GM10248 (cell line): ENCODE measurements at regions of chr10 and their contacts with region 1.

Region 1: GRCh38 chr10:71569775-71570588 is 149.6 kb downstream of the C10orf105 start:
- DNase-seq: peak; percentile 84
- CTCF ChIP-seq: peak; percentile 85

Region 2: DNA sequence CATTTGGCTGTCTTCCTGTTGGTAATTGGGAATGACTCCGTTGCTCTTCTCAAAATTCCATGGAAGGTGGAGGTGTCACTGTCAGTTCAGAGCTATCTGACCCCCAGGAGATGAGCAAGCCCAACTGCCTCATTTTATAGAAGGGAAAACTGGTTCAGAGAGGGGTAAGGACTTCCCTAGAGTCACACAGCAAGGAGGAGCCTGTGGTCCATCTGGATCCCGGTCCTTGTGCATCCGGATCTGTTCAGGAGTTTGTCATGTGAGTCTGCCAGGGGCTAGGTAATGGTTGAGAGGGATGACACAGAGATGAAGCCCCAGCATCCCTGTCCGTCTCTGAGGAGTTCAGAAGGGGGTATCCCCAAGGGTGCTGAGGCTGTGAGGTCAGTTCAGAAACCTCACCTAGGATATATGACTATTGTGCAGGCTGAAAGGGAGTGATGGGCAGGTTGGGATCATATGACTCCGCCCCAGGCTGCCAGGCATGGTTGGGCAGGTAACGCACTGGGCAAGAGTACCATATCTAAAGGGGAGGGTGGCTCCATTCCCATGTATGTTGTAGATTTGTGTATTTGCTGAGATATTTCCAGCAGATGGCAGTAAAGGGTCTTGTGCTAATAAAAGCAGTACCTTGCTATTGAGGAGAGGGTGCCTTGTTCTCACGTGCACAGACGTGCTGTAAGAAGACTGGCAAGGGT is 267.0 kb before region 1 on chr10:
- CTCF ChIA-PET with region 1: interaction called, 20 read pairs
- POLR2A ChIA-PET with region 1: no interaction called
- DNase-seq: peak; percentile 66
- CTCF ChIP-seq: peak; percentile 39

Region 3: GRCh38 chr10:71378336-71379117 is 191.5 kb before region 1 on chr10:
- CTCF ChIA-PET with region 1: interaction called, 61 read pairs
- POLR2A ChIA-PET with region 1: no interaction called
- DNase-seq: no peak
- CTCF ChIP-seq: no peak

Region 4: GRCh38 chr10:71396084-71396720 is 173.8 kb before region 1 on chr10:
- CTCF ChIA-PET with region 1: interaction called, 13 read pairs
- POLR2A ChIA-PET with region 1: no interaction called
- DNase-seq: peak; percentile 56
- CTCF ChIP-seq: peak; percentile 33

Region 5: DNA sequence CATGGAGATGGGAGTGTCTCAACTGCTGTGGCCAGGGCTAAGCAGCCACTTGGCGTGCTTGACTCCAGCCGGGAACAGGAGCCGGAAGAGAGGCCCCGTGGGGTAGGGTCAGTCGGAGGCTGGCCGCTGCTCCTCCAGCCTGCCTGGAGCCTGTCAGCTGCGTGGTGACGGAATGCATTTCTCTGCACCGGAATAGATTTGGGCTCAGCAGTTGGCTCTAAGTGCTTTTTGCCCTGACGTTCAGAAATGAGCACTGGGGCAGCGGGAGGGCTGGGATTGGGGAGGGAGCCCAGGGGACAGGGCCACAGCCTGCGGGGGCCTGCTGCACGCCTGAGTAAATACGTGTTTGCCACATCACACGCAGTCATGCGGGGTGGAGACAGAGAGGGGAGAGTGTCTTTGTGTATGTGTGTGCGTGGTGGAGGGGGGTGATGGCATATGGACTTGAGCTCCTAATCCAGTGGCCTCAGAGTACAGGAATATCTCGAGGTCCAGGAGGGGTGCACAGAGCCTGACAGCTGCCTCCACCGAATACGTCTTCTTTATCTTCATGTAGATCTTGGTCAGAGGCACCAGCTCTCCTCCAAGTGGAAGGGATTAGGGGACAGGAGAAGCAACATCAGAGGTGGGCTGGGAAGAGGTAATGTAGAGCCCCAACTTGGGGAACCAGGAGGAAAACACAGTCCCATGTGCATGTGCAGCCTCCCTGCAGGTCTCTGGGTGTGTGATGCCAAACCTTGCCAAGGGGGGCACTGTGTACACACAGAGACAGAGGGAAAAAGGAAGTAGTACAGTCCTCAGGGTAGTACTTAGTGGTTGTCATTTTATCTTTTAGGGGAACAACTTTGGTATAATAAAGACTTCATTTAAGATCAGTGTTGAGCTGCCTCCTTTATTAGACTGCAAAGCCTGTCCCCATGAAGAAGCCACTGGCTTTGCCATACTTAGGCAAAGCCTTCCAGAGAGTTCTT is 21.8 kb before region 1 on chr10:
- CTCF ChIA-PET with region 1: interaction called, 59 read pairs
- POLR2A ChIA-PET with region 1: no interaction called
- DNase-seq: peak; percentile 57
- CTCF ChIP-seq: peak; percentile 42

Region 6: DNA sequence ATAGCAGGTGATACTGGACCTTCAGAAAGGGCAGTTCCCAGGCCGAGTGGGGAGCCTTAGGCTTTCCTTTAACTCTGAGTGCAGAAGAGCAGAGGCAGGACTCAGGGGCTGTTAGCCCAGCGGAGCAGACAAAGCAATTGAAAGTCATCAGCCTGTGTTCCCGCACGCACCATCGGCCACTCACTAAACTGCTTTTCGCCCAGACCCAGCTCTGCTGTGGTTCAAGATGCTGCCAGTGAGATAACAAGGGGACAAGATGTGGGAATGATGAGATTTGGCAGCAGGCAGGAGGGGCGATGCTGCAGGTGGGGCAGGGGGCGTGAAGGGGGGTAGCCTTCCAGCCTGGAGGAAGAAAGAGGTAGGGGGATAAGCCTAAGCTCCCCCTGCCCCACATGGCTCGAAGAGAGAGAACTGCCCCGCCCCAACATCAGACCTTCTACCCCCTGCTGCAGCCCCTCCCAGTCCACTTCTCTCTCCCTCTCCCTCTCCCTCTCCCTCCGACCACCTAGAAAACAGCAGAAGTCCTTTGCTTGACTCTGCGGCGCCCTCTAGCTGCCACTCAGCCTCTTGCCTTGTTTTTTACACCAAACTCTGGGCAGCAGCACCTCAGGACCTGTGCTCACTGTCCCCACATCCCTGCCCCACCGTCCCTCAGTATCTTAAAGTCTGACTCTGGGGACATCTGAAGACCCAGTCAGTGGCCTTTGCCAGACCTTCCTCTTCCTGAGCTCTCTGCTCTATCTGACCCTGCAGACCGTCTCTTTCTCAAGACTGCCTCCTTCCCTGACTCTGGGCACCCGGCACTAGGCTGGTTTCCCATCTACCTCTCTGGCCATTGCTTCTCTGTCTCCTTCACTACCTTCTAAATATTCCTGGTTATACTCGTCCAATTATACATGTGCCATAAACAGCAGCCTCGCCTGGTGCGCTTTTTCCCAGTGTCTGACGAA is 39.1 kb after region 1 on chr10:
- CTCF ChIA-PET with region 1: interaction called, 10 read pairs
- POLR2A ChIA-PET with region 1: no interaction called
- DNase-seq: peak; percentile 73
- CTCF ChIP-seq: peak; percentile 78